ENCODE measurements at regions of chr2 and their contacts with region 1.

Region 1: GRCh38 chr2:177164584-177165052 is 48.0 kb upstream of the HNRNPA3 start:
- DNase-seq: peak; percentile 79 to 89
- H3K4me3 ChIP-seq: no peak overlapping the region
- H3K4me1 ChIP-seq: peaks cover 27% of the 10 kb centered on the region
- H3K27me3 ChIP-seq: peaks cover 8% of the 10 kb centered on the region; the same call in 1 of the 2 replicates

Region 2: DNA sequence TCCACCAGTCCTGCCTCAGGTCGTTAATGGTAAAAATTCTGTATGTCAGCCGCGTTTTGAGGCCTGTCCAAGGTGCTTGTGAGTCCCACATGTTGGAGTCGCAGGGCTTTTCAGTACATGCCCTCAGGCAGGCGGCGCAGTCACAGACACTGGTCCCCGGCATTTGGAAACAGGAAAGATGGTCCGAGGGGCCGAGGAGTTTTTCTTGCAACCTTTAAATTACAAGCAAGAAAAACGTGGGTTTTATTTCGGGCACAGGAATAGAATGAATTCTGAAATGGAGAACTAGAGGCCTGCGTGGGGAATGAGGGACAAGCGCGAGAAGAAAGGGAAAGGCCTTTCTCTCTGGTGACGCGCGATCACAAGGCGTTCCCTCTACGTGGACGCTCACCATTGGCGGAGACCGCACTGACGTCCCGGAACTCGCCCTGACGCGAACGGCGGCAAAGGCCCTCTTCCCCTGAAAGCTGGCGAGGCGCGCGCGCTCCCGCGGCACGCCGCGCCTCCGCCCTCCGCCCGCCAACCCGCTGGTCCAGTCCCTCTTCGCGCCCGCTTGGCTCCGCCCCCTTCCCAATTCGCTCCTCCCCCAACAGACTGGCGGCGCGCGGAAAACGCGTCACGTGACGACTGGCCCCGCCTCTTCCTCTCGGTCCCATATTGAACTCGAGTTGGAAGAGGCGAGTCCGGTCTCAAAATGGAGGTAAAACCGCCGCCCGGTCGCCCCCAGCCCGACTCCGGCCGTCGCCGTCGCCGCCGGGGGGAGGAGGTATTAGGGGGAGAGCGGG is 47.7 kb after region 1 on chr2 and contains the start of gene HNRNPA3:
- in situ Hi-C with region 1: loop called (anchors 5 kb)
- DNase-seq: peak; percentile 93 to 99
- H3K4me3 ChIP-seq: peak within 1 kb of the TSS; percentile 82
- H3K4me1 ChIP-seq: peaks cover 15% of the 10 kb centered on the region
- H3K27me3 ChIP-seq: no peaks in the 10 kb centered on the region

Region 3: GRCh38 chr2:177355874-177356273 is 191.3 kb after region 1 on chr2:
- in situ Hi-C with region 1: no loop called
- DNase-seq: no peak
- H3K4me3 ChIP-seq: no peak overlapping the region
- H3K4me1 ChIP-seq: no peaks in the 10 kb centered on the region
- H3K27me3 ChIP-seq: no peaks in the 10 kb centered on the region; the same call in 1 of the 2 replicates

Region 4: GRCh38 chr2:177419274-177419673 is 254.7 kb after region 1 on chr2:
- in situ Hi-C with region 1: loop called (anchors 10 kb)
- DNase-seq: no peak
- H3K4me3 ChIP-seq: no peak overlapping the region
- H3K4me1 ChIP-seq: peaks cover 20% of the 10 kb centered on the region
- H3K27me3 ChIP-seq: no peaks in the 10 kb centered on the region

Region 5: GRCh38 chr2:177763532-177764265 is 599.1 kb after region 1 on chr2:
- in situ Hi-C with region 1: loop called (anchors 10 kb)
- DNase-seq: peak; percentile 67 to 93
- H3K4me3 ChIP-seq: no peak overlapping the region
- H3K4me1 ChIP-seq: peaks cover 9% of the 10 kb centered on the region
- H3K27me3 ChIP-seq: peaks cover 6% of the 10 kb centered on the region; the same call in 1 of the 2 replicates

Measured in HAP-1 (cell line).